Left colon (tissue), 2 donors: ENCODE measurements at regions of chr11 and their contacts with region 1.

Region 1: DNA sequence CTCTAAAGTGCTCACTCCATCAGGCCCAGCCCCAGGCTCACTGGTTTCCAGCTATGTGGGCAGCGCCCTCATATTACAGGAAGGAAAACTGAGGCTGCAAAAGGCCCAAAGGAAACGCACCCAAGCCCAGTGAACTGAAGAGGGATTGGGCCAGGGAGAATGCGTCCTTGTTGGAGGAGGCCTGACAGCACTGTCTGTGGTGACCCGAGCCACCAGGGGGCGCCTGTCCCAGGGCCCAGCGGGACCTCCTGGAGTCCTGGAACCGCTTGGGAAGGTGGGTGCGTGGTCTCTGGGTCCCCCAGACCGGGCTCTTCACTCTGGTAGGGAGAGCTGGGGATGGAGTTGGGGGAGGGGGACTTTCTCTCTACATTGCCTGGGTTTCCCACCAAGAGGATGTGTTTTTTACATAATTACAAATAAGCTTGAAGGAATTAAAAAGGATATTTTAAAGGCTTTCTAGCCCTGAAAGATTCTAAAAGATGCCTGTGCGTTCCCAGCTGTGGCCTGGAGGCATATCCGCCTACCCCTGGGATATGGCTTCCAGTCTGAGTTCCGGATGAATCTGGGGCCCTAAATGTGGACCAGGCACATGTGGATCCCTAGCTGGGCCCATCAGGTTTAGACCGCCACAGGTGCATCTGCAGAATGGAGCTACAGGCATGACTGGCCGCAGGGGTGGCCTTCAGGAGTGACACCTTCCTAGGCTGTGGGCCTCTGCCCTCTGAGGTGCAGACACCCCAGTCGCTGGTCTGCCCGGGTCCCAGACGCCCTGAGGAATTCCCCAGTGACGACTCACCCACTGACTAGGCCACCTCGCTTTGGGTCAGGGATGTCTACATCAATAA is 4.2 kb downstream of the SPI1 start:
- DNase-seq: peak; percentile 65 to 89
- ATAC-seq: peak; percentile 91

Region 2: DNA sequence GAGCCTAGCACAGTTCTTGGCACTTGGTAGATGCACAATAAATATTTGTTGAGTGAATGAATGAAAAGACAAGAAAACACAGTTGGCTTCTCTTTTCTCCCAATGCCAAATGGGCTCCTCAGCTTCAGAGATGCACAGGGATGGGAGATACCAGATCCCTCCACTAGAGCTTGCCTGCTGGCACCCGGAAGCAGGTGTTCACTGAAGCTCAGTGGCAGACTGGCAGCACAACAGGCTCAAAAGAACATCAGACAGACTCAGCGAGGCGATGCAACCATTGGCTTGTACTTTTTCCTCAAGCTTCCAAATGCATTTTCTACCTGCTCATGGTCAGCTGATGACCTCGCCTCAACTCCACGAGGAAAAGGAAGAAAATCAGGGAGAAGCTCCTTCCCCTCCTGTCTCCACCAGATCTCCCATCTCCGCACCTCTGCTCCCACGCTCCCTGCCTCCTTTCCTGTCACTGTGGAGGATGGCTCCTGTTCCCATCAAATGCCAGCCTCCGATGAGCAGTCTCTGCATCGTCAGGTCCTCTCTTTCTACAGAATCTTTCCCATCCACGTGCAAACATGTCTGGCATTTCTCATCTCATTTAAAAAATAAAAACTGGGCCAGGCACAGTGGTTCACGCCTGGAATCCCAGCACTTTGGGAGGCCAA is 69.1 kb after region 1 on chr11:
- intact Hi-C with region 1: loop called in 1 of 2 experiments (anchors 10 kb)
- DNase-seq: no peak
- ATAC-seq: no peak

Region 3: GRCh38 chr11:47454180-47454644 is 80.1 kb after region 1 on chr11:
- intact Hi-C with region 1: loop called (anchors 10 kb)
- DNase-seq: peak; percentile 74 to 77
- ATAC-seq: peak; percentile 92

Region 4: GRCh38 chr11:48366365-48366764 is 992.3 kb after region 1 on chr11 and contains the start of gene OR4C5:
- intact Hi-C with region 1: no loop called
- DNase-seq: no peak
- ATAC-seq: no peak
- total RNA-seq, gene OR4C5: not detected